Right ventricle myocardium inferior (tissue), 1 donor: ENCODE measurements at regions of chr2 and their contacts with region 1.

Region 1: GRCh38 chr2:151619337-151619989 is 114.8 kb downstream of the NEB start:
- DNase-seq: no peak
- ATAC-seq: no peak

Region 2: DNA sequence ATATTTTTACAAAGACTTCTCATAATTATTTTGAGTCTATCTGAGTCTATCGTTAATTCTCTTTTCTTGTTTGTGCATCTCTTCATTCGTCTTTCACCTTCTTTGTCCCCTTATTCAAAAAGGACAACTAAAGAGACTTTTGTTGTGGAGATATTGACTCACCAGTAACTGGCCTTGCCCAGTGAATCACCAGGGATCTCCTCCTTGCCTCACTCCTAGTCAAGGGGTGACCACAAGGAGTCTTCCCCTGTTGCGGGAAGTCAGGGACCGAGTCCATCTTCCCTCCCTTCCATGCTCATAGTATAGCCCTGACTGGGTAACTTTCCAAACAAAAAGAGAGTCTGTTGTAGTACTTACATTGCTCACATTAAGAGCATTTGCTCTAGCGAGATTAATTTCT is 44.1 kb before region 1 on chr2:
- intact Hi-C with region 1: no loop called
- DNase-seq: no peak
- ATAC-seq: no peak

Region 3: DNA sequence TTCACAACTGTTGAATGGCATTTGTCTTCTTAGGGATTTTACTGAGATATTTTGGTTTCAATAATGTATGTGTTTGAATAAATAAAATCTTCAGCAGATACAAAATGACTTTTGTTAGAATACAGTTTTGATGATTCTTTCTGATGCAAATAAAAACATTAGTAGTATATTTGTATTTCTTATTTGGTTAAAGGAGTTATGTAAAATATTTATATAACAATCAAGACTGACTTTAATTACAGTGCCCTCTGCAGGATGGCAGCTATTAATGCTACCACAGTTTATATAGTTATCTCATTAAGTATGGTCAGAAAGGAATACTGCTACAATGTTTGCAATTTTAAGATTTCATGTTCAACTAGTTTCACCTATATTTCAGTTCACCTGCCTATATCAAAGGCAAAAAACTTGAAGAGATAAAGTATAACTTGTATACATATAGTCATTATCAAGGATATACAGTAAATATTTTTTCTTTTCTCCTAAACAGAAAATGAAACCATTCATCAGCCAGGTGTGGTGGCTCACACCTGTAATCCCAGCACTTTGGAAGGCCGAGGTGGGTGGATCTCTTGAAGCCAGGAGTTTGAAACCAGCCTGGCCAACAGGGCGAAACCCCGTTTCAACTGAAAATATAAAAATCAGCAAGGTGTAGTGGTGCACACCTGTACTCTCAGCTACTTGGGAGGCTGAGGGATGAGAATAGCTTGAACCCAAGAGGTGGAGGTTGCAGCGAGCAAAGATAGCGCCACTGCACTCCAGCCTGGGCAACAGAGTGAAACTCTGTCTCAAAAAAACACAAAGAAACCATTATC is 189.0 kb after region 1 on chr2:
- intact Hi-C with region 1: loop called (anchors 10 kb)
- DNase-seq: no peak
- ATAC-seq: no peak

Region 4: DNA sequence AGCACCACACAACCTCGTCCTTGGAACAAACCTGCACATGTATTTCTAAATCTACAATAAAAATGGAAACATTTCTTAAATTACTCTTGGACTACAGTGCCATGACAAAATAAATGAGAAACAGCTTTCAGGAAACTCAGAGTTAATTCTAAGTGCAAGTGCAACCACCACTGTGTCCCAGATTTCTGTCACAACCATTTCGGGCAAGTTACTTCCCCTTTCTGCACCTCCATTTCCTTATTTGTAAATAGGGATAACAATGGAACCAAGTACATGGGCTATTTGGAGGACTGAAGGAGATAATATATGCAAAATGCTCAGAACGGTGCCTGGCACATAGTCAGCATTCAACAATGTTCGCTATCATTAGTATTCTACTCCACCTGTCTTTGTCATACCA is 386.1 kb after region 1 on chr2:
- intact Hi-C with region 1: loop called (anchors 2 kb)
- DNase-seq: no peak
- ATAC-seq: no peak